Ascending aorta (tissue), 2 donors: ENCODE measurements at regions of chr12 and their contacts with region 1.

Region 1: GRCh38 chr12:122078141-122079032 is at the start of gene MLXIP:
- DNase-seq: peak; percentile 72 to 96
- H3K4me3 ChIP-seq: peak within 1 kb of the TSS; percentile 80 to 85
- H3K27ac ChIP-seq: peak within 1 kb of the TSS; percentile 75 to 79
- H3K4me1 ChIP-seq: peaks cover 10 to 26% of the 10 kb centered on the region in 2 donors
- H3K27me3 ChIP-seq: no peaks in the 10 kb centered on the region
- CTCF ChIP-seq: no peak
- total RNA-seq, gene MLXIP: 62.3 TPM

Region 2: GRCh38 chr12:122021822-122022526 is 56.4 kb before region 1 on chr12 and contains the start of gene BCL7A:
- intact Hi-C with region 1: loop called (anchors 1 kb)
- DNase-seq: peak; percentile 22 to 82
- H3K4me3 ChIP-seq: peak within 1 kb of the TSS; percentile 95 to 97
- H3K27ac ChIP-seq: peak within 1 kb of the TSS; percentile 87 to 93
- H3K4me1 ChIP-seq: peaks cover 4 to 16% of the 10 kb centered on the region in 2 donors
- H3K27me3 ChIP-seq: no peaks in the 10 kb centered on the region
- CTCF ChIP-seq: no peak
- total RNA-seq, gene BCL7A: 3.2 TPM

Region 3: DNA sequence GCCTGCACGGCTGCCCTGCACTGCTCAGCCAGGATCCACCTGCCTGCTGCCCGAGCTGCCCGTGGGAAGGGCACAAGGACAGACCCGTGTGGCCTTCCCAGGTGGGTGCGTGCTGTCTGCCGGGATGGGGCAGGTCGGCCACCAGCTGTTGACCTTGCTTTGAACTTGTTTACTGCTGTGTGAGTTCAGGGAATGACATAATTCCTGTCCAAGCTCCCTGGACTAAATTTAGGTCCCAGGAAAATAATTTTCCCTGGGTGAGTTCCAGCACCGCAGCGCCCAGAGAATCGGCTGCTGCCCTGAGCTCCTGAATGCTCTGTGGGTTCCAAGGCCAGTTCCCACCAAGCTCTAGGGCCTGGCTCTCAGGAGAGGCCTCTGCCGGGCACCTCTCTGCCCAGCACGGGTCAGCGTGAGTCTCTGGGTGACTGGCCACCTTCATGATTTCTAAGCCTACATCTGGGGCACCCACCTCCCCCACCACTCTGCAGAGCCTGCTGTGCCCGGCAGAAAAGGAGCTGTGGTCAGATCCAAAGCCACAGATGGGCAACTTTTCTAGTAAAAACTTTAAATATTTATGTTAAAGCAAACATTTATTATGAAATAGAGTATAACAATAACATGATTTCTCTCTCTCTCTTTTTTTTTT is 27.0 kb before region 1 on chr12:
- intact Hi-C with region 1: loop called (anchors 2 kb)
- DNase-seq: no peak
- H3K4me3 ChIP-seq: no peak overlapping the region
- H3K27ac ChIP-seq: peak overlapping the region; percentile 70 to 78
- H3K4me1 ChIP-seq: peaks cover 0 to 5% of the 10 kb centered on the region in 2 donors
- H3K27me3 ChIP-seq: no peaks in the 10 kb centered on the region
- CTCF ChIP-seq: no peak

Region 4: DNA sequence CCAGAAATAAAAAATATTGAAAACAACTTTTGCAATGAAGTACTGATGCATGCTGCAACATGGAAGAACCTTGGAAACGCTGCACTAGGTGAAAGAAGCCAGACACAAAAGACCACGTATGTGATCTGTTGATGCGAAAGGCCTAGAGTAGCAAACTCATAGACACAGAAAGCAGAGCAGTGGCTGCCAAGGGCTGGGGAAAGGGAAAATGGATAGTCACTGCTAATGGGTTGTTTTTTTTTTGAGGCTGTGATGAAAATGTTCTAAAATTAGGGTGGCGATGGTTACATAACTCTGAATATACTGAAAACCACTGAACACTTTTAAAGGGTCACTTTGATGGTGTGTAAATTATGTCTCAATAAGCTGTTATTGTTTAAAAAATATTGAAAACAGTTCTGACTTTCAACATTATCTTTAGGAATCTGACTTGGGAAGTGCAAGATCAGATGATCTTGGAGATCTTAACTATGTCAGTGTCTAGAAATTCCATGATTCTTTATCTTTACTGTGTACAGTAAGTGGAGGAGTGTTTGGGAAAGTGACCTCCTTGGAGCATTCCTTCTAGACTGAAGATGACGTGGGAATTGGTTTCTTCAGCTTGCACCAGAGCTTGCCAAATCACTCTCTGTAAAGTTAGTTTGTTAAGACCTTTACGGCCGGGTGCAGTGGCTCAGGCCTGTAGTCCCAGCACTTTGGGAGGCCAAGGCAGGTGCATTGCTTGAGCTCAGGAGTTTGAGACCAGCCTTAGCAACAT is 12.6 kb after region 1 on chr12:
- intact Hi-C with region 1: loop called (anchors 1 kb)
- DNase-seq: peak in 1 of 2 donors; percentile 77
- H3K4me3 ChIP-seq: peak overlapping the region in 1 of 2 donors; percentile 2
- H3K27ac ChIP-seq: peak overlapping the region; percentile 66 to 67
- H3K4me1 ChIP-seq: peaks cover 12 to 42% of the 10 kb centered on the region in 2 donors
- H3K27me3 ChIP-seq: no peaks in the 10 kb centered on the region
- CTCF ChIP-seq: no peak

Region 5: DNA sequence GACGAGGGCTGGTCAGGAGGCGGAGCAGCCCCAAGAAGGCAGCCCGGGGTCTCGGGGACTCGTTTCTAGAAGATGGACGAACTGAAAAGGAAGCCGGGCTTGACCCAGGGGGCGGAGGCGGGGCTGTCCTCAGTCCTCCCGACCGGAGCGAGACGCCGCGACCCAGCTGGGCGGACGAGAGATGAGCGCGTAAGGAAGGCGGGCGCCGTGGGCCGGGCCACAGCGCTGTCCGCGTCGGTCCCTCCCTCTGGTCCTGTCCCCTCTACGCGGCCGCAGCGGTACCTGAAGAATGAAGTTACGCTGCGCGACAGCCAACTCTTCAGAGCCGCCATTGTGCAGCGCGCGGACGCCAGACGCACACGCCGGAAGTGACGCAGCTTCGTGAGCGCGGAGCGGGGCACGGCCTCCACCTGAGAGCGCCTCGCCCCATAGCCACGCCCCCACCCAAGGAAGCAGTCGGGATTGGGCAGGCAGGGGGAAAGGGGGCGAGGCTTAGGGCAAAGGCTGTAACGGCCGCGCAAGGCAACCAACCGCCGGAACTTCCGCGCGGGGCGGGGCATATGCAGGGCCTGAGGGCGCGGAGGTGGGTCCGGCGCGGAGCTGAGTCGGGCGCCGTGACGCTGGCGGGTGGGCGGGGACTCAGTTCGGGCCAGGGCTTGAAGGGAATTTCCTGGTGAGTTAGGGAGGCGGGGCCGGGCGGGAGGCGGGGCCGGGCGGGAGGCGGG is 147.5 kb after region 1 on chr12 and contains the start of gene DIABLO:
- intact Hi-C with region 1: loop called (anchors 1 kb)
- DNase-seq: peak; percentile 99 to 100
- H3K4me3 ChIP-seq: peak within 1 kb of the TSS; percentile 63 to 82
- H3K27ac ChIP-seq: peak within 1 kb of the TSS; percentile 91
- H3K4me1 ChIP-seq: peaks cover 10 to 17% of the 10 kb centered on the region in 2 donors
- H3K27me3 ChIP-seq: no peaks in the 10 kb centered on the region
- CTCF ChIP-seq: peak in 1 of 3 experiments; percentile 5
- total RNA-seq, gene DIABLO: 54.8 TPM

Region 6: GRCh38 chr12:122309564-122310121 is 231.3 kb after region 1 on chr12:
- intact Hi-C with region 1: no loop called
- DNase-seq: no peak
- H3K4me3 ChIP-seq: no peak overlapping the region
- H3K27ac ChIP-seq: no peak overlapping the region
- H3K4me1 ChIP-seq: no peaks in the 10 kb centered on the region
- H3K27me3 ChIP-seq: no peaks in the 10 kb centered on the region
- CTCF ChIP-seq: no peak